Ovary (tissue), 10 donors: ENCODE measurements at regions of chr12 and their contacts with region 1.

Region 1: DNA sequence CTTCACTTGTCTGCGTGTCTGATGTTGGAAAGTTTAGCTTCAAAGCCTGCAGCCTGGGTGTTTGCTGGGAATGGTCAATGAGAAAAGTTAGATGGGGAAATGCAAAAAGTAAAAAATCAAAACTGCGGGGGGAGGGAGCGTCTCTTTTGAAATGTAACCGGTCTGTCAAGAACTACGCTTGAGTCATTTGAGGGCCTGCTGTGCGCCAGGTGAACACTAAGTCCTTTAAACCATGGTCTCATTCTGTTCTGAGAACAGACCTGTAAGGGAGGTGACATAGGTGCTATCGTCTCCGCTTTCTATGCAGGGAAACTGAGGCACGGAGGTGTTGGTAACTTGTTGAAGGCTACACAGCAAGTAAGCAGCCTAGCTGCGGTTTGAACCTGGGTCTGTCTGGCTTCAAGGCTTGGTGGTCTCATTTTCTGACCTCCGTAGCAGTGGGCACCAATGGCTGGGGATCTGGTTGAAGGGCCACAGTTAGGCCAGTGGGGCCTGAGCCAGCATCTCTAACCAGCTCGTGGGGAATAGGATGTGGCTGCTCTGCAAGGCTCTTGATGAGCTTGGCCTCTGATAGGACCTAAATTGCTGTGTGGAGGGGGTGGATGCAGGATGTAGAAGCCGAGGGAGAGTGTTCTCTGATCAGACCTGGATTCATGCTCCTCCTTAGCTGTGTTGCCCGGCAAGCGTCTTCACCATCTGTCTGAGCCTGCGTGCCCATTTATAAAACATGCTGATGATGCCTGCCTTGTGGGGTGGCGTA is 41.5 kb downstream of the KCTD10 start:
- DNase-seq: no peak
- H3K4me3 ChIP-seq: no peak overlapping the region
- H3K27ac ChIP-seq: no peak overlapping the region
- H3K4me1 ChIP-seq: no peaks in the 10 kb centered on the region
- H3K27me3 ChIP-seq: no peaks in the 10 kb centered on the region
- CTCF ChIP-seq: no peak
- EP300 ChIP-seq: no peak
- POLR2A ChIP-seq: no peak

Region 2: GRCh38 chr12:109222496-109222895 is 213.1 kb before region 1 on chr12:
- intact Hi-C with region 1: no loop called
- DNase-seq: no peak
- H3K4me3 ChIP-seq: no peak overlapping the region
- H3K27ac ChIP-seq: no peak overlapping the region
- H3K4me1 ChIP-seq: no peaks in the 10 kb centered on the region
- H3K27me3 ChIP-seq: no peaks in the 10 kb centered on the region
- CTCF ChIP-seq: no peak
- EP300 ChIP-seq: no peak
- POLR2A ChIP-seq: no peak

Region 3: DNA sequence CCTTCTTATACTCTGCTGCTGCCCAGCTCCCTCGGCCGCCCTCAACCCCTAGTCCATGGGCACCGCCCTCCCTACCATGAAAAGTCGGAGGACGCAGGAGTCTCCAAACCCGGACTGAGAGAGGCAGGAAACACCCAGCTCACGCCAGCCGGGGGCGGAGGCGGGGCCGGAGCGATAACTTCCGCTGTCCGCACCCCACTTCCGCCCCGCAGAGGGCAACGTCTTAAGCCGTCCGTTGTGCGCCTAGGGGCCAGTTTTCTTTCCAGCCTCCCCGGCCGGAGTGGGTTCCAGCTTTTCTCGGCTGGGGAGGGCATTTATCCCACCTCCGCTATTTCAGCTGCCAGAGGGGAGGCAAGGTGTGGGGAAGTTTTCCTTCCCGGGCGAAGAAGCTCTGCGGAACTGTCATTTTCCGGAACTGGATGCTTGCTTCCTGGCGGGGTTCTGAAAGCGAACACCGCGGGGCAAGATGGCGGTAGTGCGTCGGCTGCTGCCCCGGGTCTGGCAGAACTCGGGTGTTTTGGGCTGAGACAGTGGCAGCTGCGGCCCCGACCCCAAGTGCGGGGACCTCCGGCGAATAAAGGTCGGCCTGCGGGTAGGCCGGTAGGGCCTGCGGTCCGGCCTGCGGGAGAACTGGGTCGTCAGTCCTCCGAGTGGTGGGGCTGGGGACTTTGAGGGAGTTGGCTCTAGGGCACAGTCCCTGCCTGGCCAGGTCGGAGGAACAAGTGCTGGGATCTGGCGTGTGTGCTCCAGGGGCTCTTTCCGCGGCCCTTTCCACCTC is 41.8 kb after region 1 on chr12 and contains the starts of genes KCTD10 and UBE3B:
- intact Hi-C with region 1: loop called in 1 of 4 experiments (anchors 5 kb)
- DNase-seq: peak; percentile 85 to 92 (median 91)
- H3K4me3 ChIP-seq: peak within 1 kb of the TSS; percentile 97
- H3K27ac ChIP-seq: peak within 1 kb of the TSS; percentile 90 to 91
- H3K4me1 ChIP-seq: peaks cover 9% of the 10 kb centered on the region
- H3K27me3 ChIP-seq: no peaks in the 10 kb centered on the region
- CTCF ChIP-seq: peak in 2 of 3 donors; percentile 31 to 56
- EP300 ChIP-seq: no peak
- POLR2A ChIP-seq: peak; percentile 44
- total RNA-seq, gene KCTD10: 21.9 to 47.9 (median 38.0) TPM
- total RNA-seq, gene UBE3B: 21.9 to 53.4 (median 33.5) TPM